Lower leg skin (tissue), 4 donors: ENCODE measurements at regions of chr5 and their contacts with region 1.

Region 1: DNA sequence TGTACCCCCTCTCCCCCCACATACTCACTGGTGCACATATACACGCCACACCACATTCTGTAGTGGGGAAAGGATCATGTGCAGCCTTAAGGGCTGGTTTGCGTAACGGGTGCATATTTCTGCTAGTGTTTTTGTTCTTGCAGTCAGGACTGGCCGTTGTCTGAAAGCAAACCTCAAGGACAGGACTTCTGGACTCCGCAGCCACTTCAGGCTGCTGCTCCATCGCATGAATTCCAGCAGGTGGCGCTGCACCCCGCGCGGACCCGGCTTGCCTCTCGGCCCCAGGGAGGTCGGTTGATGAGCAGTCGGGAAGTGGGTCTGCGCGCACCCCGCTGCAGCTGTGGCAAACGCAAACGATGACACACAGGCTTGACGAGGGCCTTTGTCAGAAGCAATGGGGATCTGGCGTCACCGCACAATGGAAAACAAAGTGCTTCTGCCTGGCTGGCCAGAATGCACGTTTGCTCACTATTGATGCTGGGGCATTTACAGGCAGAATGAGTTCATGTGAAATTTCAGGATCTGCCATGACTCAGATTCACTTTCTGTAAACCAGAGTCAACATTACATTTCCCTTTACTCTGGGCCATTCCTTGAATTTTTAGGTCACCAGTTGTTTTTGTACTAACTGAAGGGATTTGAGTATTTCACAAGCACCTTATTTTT is 36.3 kb upstream of the GLRX start:
- DNase-seq: peak; percentile 87 to 98
- H3K4me3 ChIP-seq: no peak overlapping the region
- CTCF ChIP-seq: peak in 2 of 3 donors; percentile 90 to 98
- POLR2A ChIP-seq: no peak

Region 2: GRCh38 chr5:94575196-94575595 is 1283.6 kb before region 1 on chr5:
- intact Hi-C with region 1: no loop called
- DNase-seq: no peak
- H3K4me3 ChIP-seq: no peak overlapping the region
- CTCF ChIP-seq: no peak
- POLR2A ChIP-seq: no peak

Region 3: GRCh38 chr5:95961617-95962474 is 103.1 kb after region 1 on chr5 and contains the start of gene ELL2:
- intact Hi-C with region 1: loop called (anchors 10 kb)
- DNase-seq: peak; percentile 98 to 100
- H3K4me3 ChIP-seq: peak within 1 kb of the TSS; percentile 86
- CTCF ChIP-seq: no peak
- POLR2A ChIP-seq: peak in 1 of 2 donors; percentile 89
- total RNA-seq, gene ELL2: 32.4 to 50.3 (median 45.1) TPM

Region 4: DNA sequence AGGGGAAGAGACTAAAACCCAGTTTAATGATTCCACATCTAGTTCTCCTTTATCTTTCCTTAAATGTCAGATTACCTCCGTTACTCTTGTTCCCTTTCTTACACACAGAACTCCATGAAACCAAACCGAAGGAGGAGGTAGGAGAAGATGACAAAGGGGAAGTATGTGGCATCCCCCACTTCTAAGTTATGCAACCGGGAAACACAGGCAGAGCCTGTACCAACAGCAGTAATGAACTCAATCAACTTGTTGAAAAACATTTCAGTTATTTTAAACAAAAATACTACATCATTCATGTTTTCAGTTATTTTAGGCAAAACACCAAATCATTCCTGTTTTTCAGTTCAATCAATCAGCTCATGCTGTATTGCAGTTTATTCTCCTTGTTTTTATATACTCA is 472.4 kb after region 1 on chr5:
- intact Hi-C with region 1: loop called (anchors 5 kb)
- DNase-seq: no peak
- H3K4me3 ChIP-seq: no peak overlapping the region
- CTCF ChIP-seq: no peak
- POLR2A ChIP-seq: no peak

Region 5: DNA sequence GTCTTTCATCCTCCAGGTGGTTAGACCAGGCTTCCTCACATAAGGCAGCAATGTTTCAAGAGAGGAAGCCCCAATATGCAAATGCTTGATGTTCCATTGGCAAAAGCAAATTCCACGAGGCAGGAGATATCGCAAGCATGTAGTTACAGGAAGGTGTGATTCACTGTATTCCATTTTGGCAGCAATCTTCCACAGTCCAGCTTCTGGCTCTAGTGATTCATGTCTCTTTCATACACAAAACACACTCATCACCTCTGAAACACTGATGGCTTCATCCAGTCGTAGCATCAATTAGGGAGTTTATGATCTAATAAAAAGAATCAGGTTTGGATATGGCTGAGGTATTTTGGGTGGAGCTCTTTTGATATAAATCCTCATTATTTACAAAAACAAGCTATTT is 1876.4 kb after region 1 on chr5:
- intact Hi-C with region 1: no loop called
- DNase-seq: no peak
- H3K4me3 ChIP-seq: no peak overlapping the region
- CTCF ChIP-seq: no peak
- POLR2A ChIP-seq: no peak